Activated B cell treated with CpG ODN at 0.5 μM for 24 hours (primary cell): ENCODE measurements at regions of chr10 and their contacts with region 1.

Region 1: GRCh38 chr10:88990384-88991160 is at the start of gene FAS:
- DNase-seq: peak; percentile 56
- ATAC-seq: peak; percentile 75
- H3K4me3 Mint-ChIP-seq: peak within 1 kb of the TSS; percentile 95
- H3K27ac Mint-ChIP-seq: peak within 1 kb of the TSS; percentile 88
- H3K4me1 Mint-ChIP-seq: peaks cover 53% of the 10 kb centered on the region
- H3K27me3 Mint-ChIP-seq: no peaks in the 10 kb centered on the region
- CTCF ChIP-seq: no peak
- total RNA-seq, gene FAS: 18.2 and 22.6 TPM in 2 replicates

Region 2: GRCh38 chr10:88880282-88881076 is 110.1 kb before region 1 on chr10:
- CTCF ChIA-PET with region 1: no interaction called
- POLR2A ChIA-PET with region 1: interaction called, 15 read pairs
- intact Hi-C with region 1: loop called (anchors 2 kb)
- DNase-seq: peak; percentile 77
- ATAC-seq: peak; percentile 71
- H3K4me3 Mint-ChIP-seq: peak overlapping the region; percentile 96
- H3K27ac Mint-ChIP-seq: peak overlapping the region; percentile 99
- H3K4me1 Mint-ChIP-seq: peaks cover 52% of the 10 kb centered on the region
- H3K27me3 Mint-ChIP-seq: no peaks in the 10 kb centered on the region
- CTCF ChIP-seq: no peak

Region 3: DNA sequence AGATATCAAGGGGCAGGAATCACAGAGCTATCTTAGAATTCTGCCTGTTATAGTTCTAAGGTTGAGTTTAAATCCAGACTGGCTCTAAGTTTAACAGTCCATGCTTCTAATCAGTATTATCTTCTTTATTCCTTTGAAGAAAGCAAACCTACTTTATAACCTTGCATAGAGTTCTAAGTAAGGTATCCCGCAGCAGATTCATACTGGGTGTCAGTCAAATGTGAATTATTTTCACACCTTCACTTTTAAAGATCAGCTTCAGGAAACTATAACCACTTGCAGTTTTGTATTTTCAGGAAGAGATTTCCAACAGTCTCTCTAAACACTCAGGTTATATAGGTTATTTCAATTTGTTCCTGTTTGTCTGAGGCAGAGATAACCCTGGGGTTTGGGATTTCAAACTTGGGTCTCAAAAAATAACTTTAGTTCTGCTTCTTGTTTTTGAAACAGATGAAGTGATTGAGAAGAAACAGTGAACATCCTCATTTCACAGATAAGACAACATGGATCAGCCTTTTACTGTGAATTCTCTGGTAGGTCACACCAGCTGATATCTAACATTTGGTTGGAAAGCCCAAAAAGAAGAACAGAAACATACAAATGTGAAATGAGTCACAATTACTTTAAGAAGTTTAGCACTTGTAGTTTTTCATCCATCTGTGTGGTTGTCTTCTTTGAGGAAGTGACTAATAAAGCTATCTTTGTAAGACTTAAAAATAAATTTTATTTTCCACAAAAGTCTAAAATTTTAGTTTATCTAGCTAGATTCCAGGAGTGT is 89.2 kb before region 1 on chr10:
- CTCF ChIA-PET with region 1: no interaction called
- POLR2A ChIA-PET with region 1: interaction called, 18 read pairs
- intact Hi-C with region 1: no loop called
- DNase-seq: no peak
- ATAC-seq: peak; percentile 83
- H3K4me3 Mint-ChIP-seq: peak overlapping the region; percentile 65
- H3K27ac Mint-ChIP-seq: peak overlapping the region; percentile 98
- H3K4me1 Mint-ChIP-seq: peaks cover 65% of the 10 kb centered on the region
- H3K27me3 Mint-ChIP-seq: no peaks in the 10 kb centered on the region
- CTCF ChIP-seq: no peak

Region 4: DNA sequence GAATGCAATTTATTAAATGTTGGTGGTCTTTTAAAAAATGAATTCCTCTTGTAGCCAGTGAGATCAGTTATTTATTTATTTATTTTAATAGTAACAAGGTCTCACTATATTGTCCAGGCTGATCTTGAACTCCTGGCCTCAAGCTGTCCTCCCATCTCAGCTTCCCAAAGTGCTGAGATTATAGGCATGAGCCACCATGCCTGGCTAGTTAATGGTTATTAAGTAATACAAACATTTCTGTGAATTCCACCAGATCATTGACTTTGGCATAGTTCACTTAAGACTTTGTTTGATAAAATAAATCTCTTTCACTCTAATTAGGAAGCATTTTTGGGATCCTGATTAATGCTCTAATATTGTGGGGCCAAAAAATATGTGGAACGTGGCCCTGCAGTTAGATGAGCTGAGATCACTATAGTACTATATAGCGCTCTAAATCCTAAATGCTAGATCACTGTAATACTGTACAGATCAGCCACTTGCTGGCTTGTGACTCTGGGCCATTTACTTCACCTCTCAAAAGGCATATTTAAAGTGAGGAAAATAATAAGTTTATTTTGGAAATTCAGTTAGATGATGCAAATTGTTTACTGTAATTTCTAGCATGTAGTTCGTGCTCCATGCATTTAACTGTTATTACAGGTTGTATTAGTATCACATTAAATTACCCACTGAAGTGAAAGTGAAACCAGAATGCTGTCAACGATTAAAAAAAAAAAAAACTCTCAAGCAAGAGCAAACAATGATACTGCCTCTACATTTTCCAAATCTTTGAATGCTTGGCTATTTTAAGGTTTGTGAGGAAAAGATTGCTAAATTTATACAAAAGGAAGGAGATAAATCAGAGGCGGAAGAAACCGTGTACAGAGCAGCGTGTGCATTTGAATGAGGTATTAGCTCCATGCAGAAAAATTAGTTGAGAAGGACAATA is 15.9 kb before region 1 on chr10:
- CTCF ChIA-PET with region 1: interaction called, 5 read pairs
- POLR2A ChIA-PET with region 1: interaction called, 13 read pairs
- intact Hi-C with region 1: loop called (anchors 2 kb)
- DNase-seq: no peak
- ATAC-seq: peak; percentile 34
- H3K4me3 Mint-ChIP-seq: peak overlapping the region; percentile 92
- H3K27ac Mint-ChIP-seq: peak overlapping the region; percentile 85
- H3K4me1 Mint-ChIP-seq: peaks cover 15% of the 10 kb centered on the region
- H3K27me3 Mint-ChIP-seq: no peaks in the 10 kb centered on the region
- CTCF ChIP-seq: no peak

Region 5: DNA sequence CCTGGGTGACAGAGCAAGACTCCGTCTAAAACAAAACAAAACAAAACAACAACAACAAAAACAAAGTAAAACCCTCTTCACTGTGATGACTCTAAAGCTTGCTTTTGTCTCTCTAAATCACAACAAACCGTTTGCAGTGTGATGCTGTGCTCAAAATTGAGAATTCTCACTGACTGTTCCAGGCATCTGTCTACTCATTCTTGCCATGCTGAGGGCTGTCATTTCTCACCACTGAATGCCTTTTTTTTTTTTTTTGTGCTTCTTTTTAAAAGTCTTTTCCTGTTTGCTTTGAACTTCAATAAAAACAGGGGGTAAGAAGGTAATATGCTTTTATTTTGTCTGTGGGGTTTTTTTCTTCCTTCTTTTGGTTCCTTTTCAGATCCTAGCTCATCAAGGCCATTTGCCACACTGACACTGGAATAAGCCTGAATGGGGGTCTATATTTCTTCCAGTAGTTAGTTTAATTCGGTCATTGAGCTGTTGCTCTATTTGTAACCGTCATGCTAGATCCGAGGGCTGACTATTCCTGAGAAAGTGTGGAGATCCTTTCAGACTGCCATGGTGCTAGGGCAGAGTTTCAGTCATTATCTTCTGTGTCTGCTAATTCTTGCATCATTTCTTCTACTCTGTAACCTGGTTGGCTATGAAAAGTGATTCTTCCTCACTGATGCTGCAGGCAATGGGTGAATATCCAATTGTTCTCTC is 10.6 kb after region 1 on chr10:
- CTCF ChIA-PET with region 1: interaction called, 6 read pairs
- POLR2A ChIA-PET with region 1: interaction called, 12 read pairs
- intact Hi-C with region 1: no loop called
- DNase-seq: no peak
- ATAC-seq: no peak
- H3K4me3 Mint-ChIP-seq: peak overlapping the region; percentile 28
- H3K27ac Mint-ChIP-seq: peak overlapping the region; percentile 4
- H3K4me1 Mint-ChIP-seq: peaks cover 45% of the 10 kb centered on the region
- H3K27me3 Mint-ChIP-seq: no peaks in the 10 kb centered on the region
- CTCF ChIP-seq: no peak

Region 6: DNA sequence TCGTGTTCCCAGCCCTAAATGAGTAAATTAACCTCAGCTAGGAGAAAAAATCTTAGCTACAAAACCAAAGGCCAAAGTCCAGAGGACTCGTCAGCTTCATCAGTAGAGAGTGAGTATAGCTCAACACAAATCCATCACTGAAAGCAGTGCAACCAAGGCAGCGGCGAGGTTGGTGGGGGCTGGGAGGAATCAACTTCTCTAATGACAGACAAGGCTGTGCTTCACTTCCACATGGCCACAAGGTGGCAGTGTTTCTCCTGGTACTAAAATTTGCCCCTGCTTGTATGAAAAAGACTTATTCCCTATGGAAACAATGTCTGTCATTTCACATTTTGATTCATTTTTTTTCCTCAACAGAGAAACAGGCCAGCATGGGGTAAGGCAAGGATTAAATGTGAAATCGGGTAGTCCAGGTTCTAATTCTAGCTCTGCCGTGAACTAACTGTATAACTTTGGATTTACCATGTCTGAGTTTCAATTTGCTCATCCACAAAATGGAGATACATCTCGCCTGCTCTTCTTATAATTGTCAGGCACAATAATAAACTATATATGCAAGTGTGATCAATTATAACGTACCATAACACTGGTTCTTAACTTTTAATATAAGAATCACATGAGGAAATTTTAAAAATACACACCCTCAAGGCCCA is 39.3 kb after region 1 on chr10:
- CTCF ChIA-PET with region 1: interaction called, 4 read pairs
- POLR2A ChIA-PET with region 1: no interaction called
- intact Hi-C with region 1: loop called (anchors 5 kb)
- DNase-seq: peak; percentile 22
- ATAC-seq: peak; percentile 82
- H3K4me3 Mint-ChIP-seq: no peak overlapping the region
- H3K27ac Mint-ChIP-seq: no peak overlapping the region
- H3K4me1 Mint-ChIP-seq: peaks cover 15% of the 10 kb centered on the region
- H3K27me3 Mint-ChIP-seq: no peaks in the 10 kb centered on the region
- CTCF ChIP-seq: peak; percentile 70

Region 7: DNA sequence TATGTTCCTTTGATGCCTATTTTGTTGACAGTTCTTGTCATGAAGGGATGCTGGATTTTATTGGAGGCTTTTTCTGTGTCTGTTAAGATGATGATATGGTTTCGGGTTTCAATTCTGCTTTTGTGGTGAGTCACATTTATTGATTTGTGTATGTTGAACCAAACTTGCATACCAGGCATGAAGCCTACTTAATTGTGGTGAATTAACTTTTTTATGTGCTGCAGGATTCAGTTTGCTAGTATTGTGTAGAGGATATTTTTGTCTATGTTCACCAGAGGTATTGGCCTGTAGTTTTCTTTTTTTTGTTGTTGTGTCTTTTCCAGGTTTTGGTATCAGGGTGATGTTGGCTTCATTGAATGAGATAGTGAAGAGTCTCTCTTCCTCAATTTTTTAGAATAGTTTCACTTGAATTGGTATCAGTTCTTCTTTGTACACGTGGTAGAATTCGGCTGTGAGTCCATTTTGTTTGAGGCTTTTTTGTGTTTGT is 1056.7 kb after region 1 on chr10:
- CTCF ChIA-PET with region 1: no interaction called
- POLR2A ChIA-PET with region 1: no interaction called
- intact Hi-C with region 1: loop called (anchors 5 kb)
- DNase-seq: no peak
- ATAC-seq: peak; percentile 82
- H3K4me3 Mint-ChIP-seq: peak overlapping the region; percentile 68
- H3K27ac Mint-ChIP-seq: peak overlapping the region; percentile 94
- H3K4me1 Mint-ChIP-seq: peaks cover 44% of the 10 kb centered on the region
- H3K27me3 Mint-ChIP-seq: no peaks in the 10 kb centered on the region
- CTCF ChIP-seq: no peak